ENCODE measurements at regions of chr11 and their contacts with region 1.

Region 1: DNA sequence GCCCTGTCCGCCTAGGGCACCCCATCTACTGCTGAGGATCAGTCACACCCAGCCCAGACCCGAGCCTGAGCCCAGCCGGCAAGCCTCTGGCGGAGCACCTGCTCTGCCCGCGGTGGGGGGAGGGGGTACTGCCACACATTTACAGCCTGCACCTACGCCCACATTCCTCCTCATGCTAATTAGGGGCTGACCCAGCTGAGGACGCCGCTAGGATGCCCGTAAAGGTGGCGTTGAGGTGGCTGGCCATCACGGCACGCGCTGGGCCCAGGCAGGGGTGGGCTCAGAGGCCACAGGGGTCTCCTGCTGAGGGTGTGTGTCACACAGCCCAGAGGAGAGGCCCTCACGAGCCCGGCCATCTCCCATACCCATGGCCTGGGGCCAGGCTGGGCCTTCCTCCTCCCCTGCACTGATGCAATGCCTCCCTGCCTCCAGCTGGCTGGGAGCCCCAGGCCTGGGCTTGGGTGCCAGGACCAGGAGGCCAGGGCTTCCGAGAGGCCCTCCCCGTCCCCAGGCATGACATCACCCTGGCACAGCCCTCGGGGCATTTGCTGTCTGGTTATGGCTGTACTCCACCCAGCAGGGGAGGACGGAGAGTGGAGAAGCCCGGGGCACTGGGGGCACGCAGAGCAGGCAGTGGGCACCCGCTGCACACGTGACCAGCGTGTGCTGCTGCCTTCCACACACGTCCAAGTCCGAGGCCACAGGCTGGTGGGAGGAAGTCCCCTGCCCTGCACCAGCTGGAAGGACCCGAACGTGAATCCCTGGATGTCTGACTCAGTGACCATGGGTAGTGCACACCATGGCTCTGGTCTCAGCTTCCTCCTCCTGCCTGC is 12.7 kb downstream of the DUSP8 start:
- DNase-seq: peak; percentile 92
- ATAC-seq: peak; percentile 66
- H3K4me3 ChIP-seq: peak overlapping the region; percentile 63
- H3K27ac ChIP-seq: peak overlapping the region; percentile 79
- H3K4me1 ChIP-seq: peaks cover 28% of the 10 kb centered on the region
- H3K27me3 ChIP-seq: no peaks in the 10 kb centered on the region
- CTCF ChIP-seq: no peak

Region 2: GRCh38 chr11:1546536-1547400 is 12.6 kb before region 1 on chr11:
- CTCF ChIA-PET with region 1: interaction called, 12 read pairs
- POLR2A ChIA-PET with region 1: no interaction called
- intact Hi-C with region 1: no loop called
- DNase-seq: peak; percentile 60
- ATAC-seq: peak; percentile 69
- H3K4me3 ChIP-seq: peak overlapping the region; percentile 63
- H3K27ac ChIP-seq: no peak overlapping the region
- H3K4me1 ChIP-seq: peaks cover 9% of the 10 kb centered on the region
- H3K27me3 ChIP-seq: peaks cover 6% of the 10 kb centered on the region
- CTCF ChIP-seq: peak; percentile 70

Measured in PC-3 (cell line).